ENCODE measurements at regions of chr15 and their contacts with region 1.

Region 1: GRCh38 chr15:60720493-60721256 is 241.7 kb upstream of the ICE2 start:
- DNase-seq: peak; percentile 13 to 72 (median 34)
- ATAC-seq: peak; percentile 78
- H3K4me3 ChIP-seq: peak overlapping the region; percentile 30
- H3K4me3 Mint-ChIP-seq: peak overlapping the region; percentile 78
- H3K27ac ChIP-seq: peak overlapping the region; percentile 44 to 72
- H3K27ac Mint-ChIP-seq: peak overlapping the region; percentile 86
- H3K4me1 ChIP-seq: peaks cover 48% of the 10 kb centered on the region
- H3K4me1 Mint-ChIP-seq: peaks cover 69% of the 10 kb centered on the region
- H3K27me3 ChIP-seq: no peaks in the 10 kb centered on the region
- H3K27me3 Mint-ChIP-seq: no peaks in the 10 kb centered on the region
- CTCF ChIP-seq: no peak

Region 2: GRCh38 chr15:60695713-60696522 is 24.8 kb before region 1 on chr15:
- CTCF ChIA-PET with region 1: interaction called, 12 read pairs
- POLR2A ChIA-PET with region 1: interaction called, 3 read pairs
- intact Hi-C with region 1: no loop called
- DNase-seq: peak in 11 of 14 experiments; percentile 19 to 69 (median 32)
- ATAC-seq: peak; percentile 74
- H3K4me3 ChIP-seq: peak overlapping the region; percentile 29
- H3K4me3 Mint-ChIP-seq: peak overlapping the region; percentile 73
- H3K27ac ChIP-seq: peak overlapping the region in 1 of 2 donors; percentile 24
- H3K27ac Mint-ChIP-seq: peak overlapping the region; percentile 65
- H3K4me1 ChIP-seq: peaks cover 44% of the 10 kb centered on the region
- H3K4me1 Mint-ChIP-seq: peaks cover 77% of the 10 kb centered on the region
- H3K27me3 ChIP-seq: no peaks in the 10 kb centered on the region
- H3K27me3 Mint-ChIP-seq: no peaks in the 10 kb centered on the region
- CTCF ChIP-seq: no peak

Region 3: GRCh38 chr15:60708684-60709083 is 12.0 kb before region 1 on chr15:
- CTCF ChIA-PET with region 1: interaction called, 5 read pairs
- POLR2A ChIA-PET with region 1: interaction called, 62 read pairs
- intact Hi-C with region 1: no loop called
- DNase-seq: no peak
- ATAC-seq: no peak
- H3K4me3 ChIP-seq: no peak overlapping the region
- H3K4me3 Mint-ChIP-seq: no peak overlapping the region
- H3K27ac ChIP-seq: no peak overlapping the region
- H3K27ac Mint-ChIP-seq: peak overlapping the region; percentile 60
- H3K4me1 ChIP-seq: peaks cover 20% of the 10 kb centered on the region
- H3K4me1 Mint-ChIP-seq: peaks cover 41% of the 10 kb centered on the region
- H3K27me3 ChIP-seq: no peaks in the 10 kb centered on the region
- H3K27me3 Mint-ChIP-seq: no peaks in the 10 kb centered on the region
- CTCF ChIP-seq: no peak

Region 4: GRCh38 chr15:60740787-60741354 is 20.2 kb after region 1 on chr15:
- CTCF ChIA-PET with region 1: no interaction called
- POLR2A ChIA-PET with region 1: no interaction called
- intact Hi-C with region 1: no loop called
- DNase-seq: peak in 3 of 14 experiments; percentile 47 to 68 (median 52)
- ATAC-seq: peak; percentile 43
- H3K4me3 ChIP-seq: no peak overlapping the region
- H3K4me3 Mint-ChIP-seq: no peak overlapping the region
- H3K27ac ChIP-seq: no peak overlapping the region
- H3K27ac Mint-ChIP-seq: no peak overlapping the region
- H3K4me1 ChIP-seq: peaks cover 23% of the 10 kb centered on the region
- H3K4me1 Mint-ChIP-seq: peaks cover 12% of the 10 kb centered on the region
- H3K27me3 ChIP-seq: no peaks in the 10 kb centered on the region
- H3K27me3 Mint-ChIP-seq: no peaks in the 10 kb centered on the region
- CTCF ChIP-seq: no peak

Region 5: GRCh38 chr15:60787837-60788691 is 67.4 kb after region 1 on chr15:
- CTCF ChIA-PET with region 1: interaction called, 17 read pairs
- POLR2A ChIA-PET with region 1: interaction called, 6 read pairs
- intact Hi-C with region 1: no loop called
- DNase-seq: peak in 12 of 14 experiments; percentile 13 to 71 (median 40)
- ATAC-seq: peak; percentile 78
- H3K4me3 ChIP-seq: no peak overlapping the region
- H3K4me3 Mint-ChIP-seq: peak overlapping the region; percentile 55
- H3K27ac ChIP-seq: peak overlapping the region in 1 of 2 donors; percentile 56
- H3K27ac Mint-ChIP-seq: peak overlapping the region; percentile 84
- H3K4me1 ChIP-seq: peaks cover 36% of the 10 kb centered on the region
- H3K4me1 Mint-ChIP-seq: peaks cover 34% of the 10 kb centered on the region
- H3K27me3 ChIP-seq: no peaks in the 10 kb centered on the region
- H3K27me3 Mint-ChIP-seq: no peaks in the 10 kb centered on the region
- CTCF ChIP-seq: peak; percentile 66

Measured in CD4-positive, alpha-beta T cell (primary cell).